Activated naive CD4-positive, alpha-beta T cell treated with anti-CD3 and anti-CD28 coated beads for 36 hours (primary cell): ENCODE measurements at regions of chr1 and their contacts with region 1.

Region 1: DNA sequence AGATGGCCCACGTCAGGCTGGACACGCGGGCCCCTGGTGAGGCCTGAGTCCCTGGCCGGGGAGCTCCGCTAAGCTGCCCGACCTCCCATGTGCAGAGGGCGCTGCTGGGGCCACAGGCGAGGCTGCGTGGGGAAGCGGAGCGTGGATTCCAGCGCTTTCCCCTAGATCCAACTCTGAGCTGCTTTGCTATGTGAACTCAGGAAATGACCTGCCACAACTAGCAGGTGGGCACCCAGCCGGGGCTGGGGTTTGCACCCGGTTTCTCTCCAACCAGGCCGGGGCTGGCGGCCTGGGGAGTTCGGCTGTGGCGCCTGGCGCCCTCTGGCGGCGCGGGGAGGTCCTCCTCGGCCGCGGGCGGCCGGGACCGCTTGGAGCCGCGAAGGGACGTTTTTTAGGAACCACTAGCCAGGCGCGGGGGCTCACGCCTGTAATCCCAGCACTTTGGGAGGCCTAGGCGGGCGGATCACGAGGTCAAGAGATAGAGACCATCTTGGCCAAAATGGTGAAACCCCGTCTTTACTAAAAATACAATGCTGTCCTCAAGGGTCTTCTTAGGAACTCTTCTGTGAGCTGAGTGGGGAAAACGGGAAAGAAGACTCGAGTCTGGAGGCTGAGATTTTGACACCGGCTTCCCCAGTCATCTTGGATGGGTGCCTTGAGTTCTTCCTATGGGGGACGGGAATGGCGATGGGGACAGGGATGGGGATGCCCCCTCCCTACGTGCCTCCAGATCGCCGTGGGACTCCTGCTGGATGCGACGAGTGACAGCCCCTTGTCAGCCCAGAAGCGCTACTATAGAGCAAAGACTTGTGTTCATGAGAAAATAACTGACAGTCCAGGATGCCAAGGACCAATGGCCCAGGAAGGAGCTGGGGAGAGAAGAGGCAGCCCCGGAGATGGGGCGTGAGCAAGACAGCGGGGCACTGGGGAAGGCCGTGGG is 12.6 kb downstream of the PYCR2 start:
- DNase-seq: peak; percentile 75
- H3K4me3 Mint-ChIP-seq: no peak overlapping the region
- H3K27ac Mint-ChIP-seq: no peak overlapping the region
- H3K4me1 Mint-ChIP-seq: peaks cover 21% of the 10 kb centered on the region
- H3K27me3 Mint-ChIP-seq: no peaks in the 10 kb centered on the region

Region 2: DNA sequence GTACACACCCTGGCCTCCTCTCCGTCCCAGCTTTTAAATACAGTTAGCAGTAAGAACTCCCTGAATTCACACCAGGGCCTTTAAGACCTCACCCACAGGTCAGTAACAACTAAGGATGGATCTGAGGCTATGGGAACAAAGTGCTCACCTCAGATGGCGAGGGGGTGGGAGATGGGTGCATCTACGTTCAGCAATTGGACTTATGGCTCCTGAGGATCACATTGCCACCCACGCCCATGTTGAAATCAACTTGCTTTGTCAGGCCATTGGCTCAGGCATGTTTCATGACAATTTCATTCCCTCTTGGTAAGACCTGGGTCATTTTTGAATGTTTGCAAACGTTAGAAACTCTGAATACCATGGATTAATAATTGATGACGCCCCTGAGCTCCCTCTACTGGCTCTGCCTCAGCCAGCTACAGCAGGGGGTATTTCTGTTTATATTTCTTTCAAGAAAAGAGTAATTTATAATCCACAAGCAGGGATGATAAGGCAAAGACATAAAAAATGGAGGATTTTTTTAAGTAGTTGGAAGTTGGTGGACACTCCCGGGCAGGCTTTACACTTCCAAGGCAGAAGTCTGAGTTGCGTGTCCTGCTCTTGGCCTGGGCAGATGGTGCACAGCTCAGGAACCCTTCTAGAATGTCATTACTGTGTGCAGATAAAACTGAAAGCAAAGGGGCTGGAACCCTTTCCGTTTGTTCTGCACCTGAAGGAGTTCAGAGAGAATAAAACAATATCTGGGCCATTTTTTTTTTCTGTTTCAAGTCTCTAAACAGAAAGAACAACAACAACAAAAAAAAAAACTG is 469.9 kb before region 1 on chr1:
- CTCF ChIA-PET with region 1: no interaction called
- intact Hi-C with region 1: no loop called
- DNase-seq: no peak
- H3K4me3 Mint-ChIP-seq: peak overlapping the region; percentile 12
- H3K27ac Mint-ChIP-seq: peak overlapping the region; percentile 36
- H3K4me1 Mint-ChIP-seq: peaks cover 51% of the 10 kb centered on the region
- H3K27me3 Mint-ChIP-seq: no peaks in the 10 kb centered on the region

Region 3: DNA sequence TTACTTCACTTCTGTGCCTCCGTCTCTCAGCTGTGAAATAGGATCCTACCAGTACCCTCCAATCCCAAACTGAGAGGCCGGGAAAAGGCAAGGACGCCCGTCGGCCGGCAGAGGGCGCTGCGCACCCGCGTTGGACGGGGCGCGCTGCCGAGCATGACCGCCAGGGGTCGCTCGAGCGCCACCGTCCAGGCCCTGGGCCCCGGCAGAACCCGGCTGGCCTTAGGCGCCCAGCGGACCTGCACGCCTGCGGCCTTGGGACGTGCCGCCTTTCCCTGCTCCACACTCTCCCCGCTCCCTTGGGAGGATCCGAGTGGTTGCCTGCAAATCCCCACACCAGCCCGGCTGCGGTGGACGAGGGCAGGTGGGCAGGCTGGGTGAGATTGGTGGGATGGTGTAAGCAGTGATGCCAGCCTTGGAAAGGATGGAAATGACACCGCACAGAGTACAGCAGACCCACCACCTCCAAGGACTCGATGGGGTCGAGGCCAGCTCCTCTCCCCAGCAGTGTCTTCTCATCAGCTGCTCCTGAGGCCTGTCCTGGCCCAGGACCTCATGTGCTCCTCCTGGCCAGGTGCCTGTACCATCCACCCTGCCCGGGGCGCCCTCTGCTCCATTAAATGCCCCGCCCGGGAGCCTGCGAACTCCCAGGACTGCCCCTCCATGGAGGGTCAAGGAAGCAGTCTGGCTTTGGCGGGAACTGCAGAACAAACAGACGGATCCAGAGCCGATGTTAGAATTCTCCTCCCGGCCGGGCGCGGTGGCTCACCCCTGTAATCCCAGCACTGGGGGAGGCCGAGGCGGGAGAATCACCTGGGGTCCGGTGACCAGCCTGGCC is 436.3 kb before region 1 on chr1:
- CTCF ChIA-PET with region 1: interaction called, 15 read pairs
- intact Hi-C with region 1: loop called (anchors 1 kb)
- DNase-seq: peak; percentile 60
- H3K4me3 Mint-ChIP-seq: no peak overlapping the region
- H3K27ac Mint-ChIP-seq: no peak overlapping the region
- H3K4me1 Mint-ChIP-seq: peaks cover 37% of the 10 kb centered on the region
- H3K27me3 Mint-ChIP-seq: no peaks in the 10 kb centered on the region

Region 4: GRCh38 chr1:225567590-225568194 is 343.8 kb before region 1 on chr1:
- CTCF ChIA-PET with region 1: no interaction called
- intact Hi-C with region 1: loop called (anchors 5 kb)
- DNase-seq: no peak
- H3K4me3 Mint-ChIP-seq: no peak overlapping the region
- H3K27ac Mint-ChIP-seq: no peak overlapping the region
- H3K4me1 Mint-ChIP-seq: no peaks in the 10 kb centered on the region
- H3K27me3 Mint-ChIP-seq: no peaks in the 10 kb centered on the region

Region 5: GRCh38 chr1:225866061-225866837 is 45.2 kb before region 1 on chr1:
- CTCF ChIA-PET with region 1: interaction called, 10 read pairs
- intact Hi-C with region 1: no loop called
- DNase-seq: peak; percentile 90
- H3K4me3 Mint-ChIP-seq: peak overlapping the region; percentile 4
- H3K27ac Mint-ChIP-seq: peak overlapping the region; percentile 79
- H3K4me1 Mint-ChIP-seq: peaks cover 43% of the 10 kb centered on the region
- H3K27me3 Mint-ChIP-seq: no peaks in the 10 kb centered on the region

Region 6: DNA sequence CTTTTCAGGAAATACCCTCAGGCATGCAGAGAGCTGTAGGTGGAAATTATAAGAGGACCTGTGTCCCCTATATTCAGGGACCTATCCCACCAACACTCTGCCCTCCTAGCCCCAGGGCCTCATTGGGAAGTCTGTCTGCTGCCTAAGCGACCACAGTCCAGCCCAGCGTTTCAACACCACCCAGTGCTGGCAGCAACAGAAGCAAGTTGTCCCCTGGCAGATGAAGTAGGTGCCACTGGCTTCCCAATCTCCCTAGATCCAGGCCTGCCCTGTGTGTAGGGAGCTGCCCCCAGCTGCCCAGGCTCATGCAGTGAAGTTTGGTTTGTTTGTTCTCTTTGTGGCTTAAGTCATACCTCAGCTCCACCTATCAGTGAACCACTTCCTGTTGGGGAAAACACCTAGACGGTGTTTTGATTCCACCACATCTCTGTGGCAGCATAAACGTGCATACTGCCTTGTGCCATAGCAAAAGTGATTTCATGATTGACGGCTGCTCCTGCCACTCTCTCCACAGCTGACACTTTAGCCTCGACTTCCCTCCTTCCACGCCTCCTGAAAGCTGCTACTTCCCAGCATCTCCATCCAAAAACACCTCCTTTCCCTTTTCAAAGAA is 14.4 kb before region 1 on chr1:
- CTCF ChIA-PET with region 1: interaction called, 21 read pairs
- intact Hi-C with region 1: no loop called
- DNase-seq: peak; percentile 87
- H3K4me3 Mint-ChIP-seq: peak overlapping the region; percentile 54
- H3K27ac Mint-ChIP-seq: peak overlapping the region; percentile 92
- H3K4me1 Mint-ChIP-seq: peaks cover 41% of the 10 kb centered on the region
- H3K27me3 Mint-ChIP-seq: no peaks in the 10 kb centered on the region

Region 7: GRCh38 chr1:226019572-226019971 is 108.1 kb after region 1 on chr1:
- CTCF ChIA-PET with region 1: no interaction called
- intact Hi-C with region 1: no loop called
- DNase-seq: no peak
- H3K4me3 Mint-ChIP-seq: no peak overlapping the region
- H3K27ac Mint-ChIP-seq: no peak overlapping the region
- H3K4me1 Mint-ChIP-seq: no peaks in the 10 kb centered on the region
- H3K27me3 Mint-ChIP-seq: no peaks in the 10 kb centered on the region